ENCODE measurements at regions of chr1 and their contacts with region 1.

Region 1: DNA sequence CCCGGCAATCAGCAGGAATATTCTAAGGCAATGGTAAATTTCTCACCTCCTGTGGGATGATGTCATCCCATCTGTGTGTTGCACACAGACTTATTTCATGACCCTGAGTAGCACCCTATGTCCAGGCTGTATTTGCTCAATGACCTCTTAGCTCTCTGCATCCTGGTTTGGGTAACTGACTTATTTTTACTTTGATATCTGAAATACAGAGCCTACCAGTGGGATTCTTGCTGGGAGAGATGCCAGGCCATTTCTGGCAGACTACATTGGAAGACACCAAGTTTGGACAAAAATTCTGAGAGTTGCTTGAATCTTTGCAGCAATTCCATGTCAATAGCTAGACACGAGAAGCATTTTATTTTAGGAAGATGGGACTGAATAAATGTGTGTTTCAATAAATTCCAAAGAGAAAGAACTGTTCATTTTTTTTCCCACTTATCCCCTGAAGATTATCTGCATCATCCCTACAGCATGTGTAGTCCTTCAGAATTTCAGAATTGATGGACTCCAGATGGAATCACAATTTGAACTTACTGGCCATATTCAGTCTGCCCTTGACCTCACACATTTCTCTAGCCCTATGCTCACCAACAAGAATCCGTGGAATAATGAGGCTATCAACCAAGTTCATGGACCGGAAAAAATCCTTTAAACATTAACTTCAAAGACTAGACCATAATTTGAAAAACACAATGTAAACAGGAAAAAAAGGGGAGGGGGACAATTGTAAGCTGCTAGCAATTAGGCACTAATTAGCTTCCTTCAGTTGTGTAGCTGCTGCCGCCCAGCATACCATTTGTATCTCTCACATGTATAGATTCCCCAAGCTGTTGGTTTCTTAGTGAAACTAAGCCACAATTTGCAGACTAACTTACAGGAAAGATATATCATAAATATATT is 226.5 kb downstream of the HMCN1 start:
- DNase-seq: peak; percentile 21 to 76
- ATAC-seq: peak; percentile 78 to 92 (median 88)
- H3K4me3 ChIP-seq: no peak overlapping the region
- H3K27ac ChIP-seq: peak overlapping the region in 9 of 10 donors; percentile 10 to 68 (median 40)
- H3K4me1 ChIP-seq: peaks cover 0 to 59% (median 17%) of the 10 kb centered on the region in 9 donors
- H3K27me3 ChIP-seq: no peaks in the 10 kb centered on the region
- CTCF ChIP-seq: no peak

Region 2: GRCh38 chr1:186022184-186022583 is 61.5 kb after region 1 on chr1:
- intact Hi-C with region 1: no loop called
- DNase-seq: no peak
- ATAC-seq: no peak
- H3K4me3 ChIP-seq: no peak overlapping the region
- H3K27ac ChIP-seq: no peak overlapping the region
- H3K4me1 ChIP-seq: peaks cover 0 to 5% (median 0%) of the 10 kb centered on the region in 9 donors
- H3K27me3 ChIP-seq: no peaks in the 10 kb centered on the region
- CTCF ChIP-seq: no peak

Region 3: DNA sequence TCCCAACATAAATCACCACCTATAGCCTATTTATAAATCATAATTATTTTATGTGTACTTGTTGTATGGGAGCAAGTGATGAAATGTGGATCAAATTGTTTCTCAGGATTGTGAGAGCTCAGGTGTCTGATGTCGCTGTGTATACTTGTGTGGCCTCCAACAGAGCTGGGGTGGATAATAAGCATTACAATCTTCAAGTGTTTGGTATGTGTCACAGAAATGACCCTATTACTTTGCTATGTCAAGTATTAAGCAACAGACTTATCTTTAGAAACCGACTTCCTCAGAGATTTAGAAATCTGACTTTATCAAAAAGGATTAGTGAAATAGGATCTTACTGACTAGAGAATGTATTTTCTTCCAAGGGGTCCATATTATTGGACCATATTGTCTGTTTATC is 133.5 kb after region 1 on chr1:
- intact Hi-C with region 1: loop called in 1 of 10 experiments (anchors 10 kb)
- DNase-seq: no peak
- ATAC-seq: peak in 1 of 8 donors; percentile 56
- H3K4me3 ChIP-seq: no peak overlapping the region
- H3K27ac ChIP-seq: peak overlapping the region in 8 of 10 donors; percentile 5 to 68 (median 26)
- H3K4me1 ChIP-seq: peaks cover 0 to 19% (median 10%) of the 10 kb centered on the region in 9 donors
- H3K27me3 ChIP-seq: no peaks in the 10 kb centered on the region
- CTCF ChIP-seq: no peak

Measured in heart right ventricle (tissue), 16 donors.